ENCODE measurements at regions of chr7 and their contacts with region 1.

Region 1: DNA sequence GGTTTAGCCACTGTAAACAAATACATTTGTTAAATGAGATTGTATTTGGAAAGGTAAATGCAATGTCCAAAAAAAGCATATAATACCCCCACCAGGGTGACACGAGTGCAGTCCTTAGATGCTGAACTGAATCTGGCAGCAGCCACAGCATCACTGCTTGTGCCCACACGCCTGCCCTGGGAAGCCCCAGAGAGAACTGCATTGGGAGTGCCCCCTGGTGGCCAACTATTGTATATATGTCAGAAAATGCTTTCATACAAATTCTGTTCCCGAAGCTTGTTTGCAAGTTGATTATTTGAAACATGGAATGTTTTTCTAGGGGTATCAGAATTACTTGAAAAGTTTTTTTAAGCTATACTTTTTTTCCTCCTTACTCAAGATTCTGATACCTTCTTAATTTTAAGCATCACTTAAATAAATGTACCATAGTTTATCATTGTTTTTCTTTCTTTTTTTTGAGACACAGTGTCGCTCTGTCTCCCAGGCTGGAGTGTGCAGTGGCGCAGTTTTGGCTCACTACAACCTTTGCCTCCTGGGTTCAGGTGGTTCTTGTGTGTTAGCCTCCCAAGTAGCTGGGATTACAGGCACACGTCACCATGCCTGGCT is 50.1 kb downstream of the LANCL2 start:
- DNase-seq: peak; percentile 25
- ATAC-seq: peak; percentile 99
- H3K4me3 ChIP-seq: no peak overlapping the region
- H3K27ac ChIP-seq: no peak overlapping the region
- H3K4me1 ChIP-seq: no peaks in the 10 kb centered on the region
- H3K27me3 ChIP-seq: no peaks in the 10 kb centered on the region
- CTCF ChIP-seq: peak; percentile 64 to 76 (median 65)
- EP300 ChIP-seq: no peak
- POLR2A ChIP-seq: no peak
- RAD21 ChIP-seq: peak; percentile 85

Region 2: GRCh38 chr7:54758702-54759592 is 656.3 kb before region 1 on chr7 and contains the start of gene SEC61G:
- CTCF ChIA-PET with region 1: interaction called, 4 read pairs
- POLR2A ChIA-PET with region 1: no interaction called
- RAD21 ChIA-PET with region 1: interaction called, 6 read pairs
- SMC1A ChIA-PET with region 1: no interaction called
- in situ Hi-C with region 1: loop called (anchors 25 kb)
- intact Hi-C with region 1: no loop called
- DNase-seq: peak; percentile 90
- ATAC-seq: peak; percentile 96
- H3K4me3 ChIP-seq: peak within 1 kb of the TSS; percentile 97
- H3K27ac ChIP-seq: peak within 1 kb of the TSS; percentile 78
- H3K4me1 ChIP-seq: no peaks in the 10 kb centered on the region
- H3K27me3 ChIP-seq: no peaks in the 10 kb centered on the region
- CTCF ChIP-seq: no peak
- EP300 ChIP-seq: no peak
- POLR2A ChIP-seq: peak; percentile 92
- RAD21 ChIP-seq: no peak
- polyA plus RNA-seq, gene SEC61G: 709 to 809 TPM

Region 3: GRCh38 chr7:54773472-54774399 is 641.5 kb before region 1 on chr7:
- CTCF ChIA-PET with region 1: interaction called, 6 read pairs
- POLR2A ChIA-PET with region 1: no interaction called
- RAD21 ChIA-PET with region 1: interaction called, 3 read pairs
- SMC1A ChIA-PET with region 1: interaction called, 3 read pairs
- in situ Hi-C with region 1: loop called (anchors 25 kb)
- intact Hi-C with region 1: loop called (anchors 5 kb)
- DNase-seq: no peak
- ATAC-seq: peak; percentile 82
- H3K4me3 ChIP-seq: no peak overlapping the region
- H3K27ac ChIP-seq: no peak overlapping the region
- H3K4me1 ChIP-seq: no peaks in the 10 kb centered on the region
- H3K27me3 ChIP-seq: no peaks in the 10 kb centered on the region
- CTCF ChIP-seq: peak; percentile 71 to 89 (median 82)
- EP300 ChIP-seq: no peak
- POLR2A ChIP-seq: no peak
- RAD21 ChIP-seq: peak; percentile 96

Region 4: DNA sequence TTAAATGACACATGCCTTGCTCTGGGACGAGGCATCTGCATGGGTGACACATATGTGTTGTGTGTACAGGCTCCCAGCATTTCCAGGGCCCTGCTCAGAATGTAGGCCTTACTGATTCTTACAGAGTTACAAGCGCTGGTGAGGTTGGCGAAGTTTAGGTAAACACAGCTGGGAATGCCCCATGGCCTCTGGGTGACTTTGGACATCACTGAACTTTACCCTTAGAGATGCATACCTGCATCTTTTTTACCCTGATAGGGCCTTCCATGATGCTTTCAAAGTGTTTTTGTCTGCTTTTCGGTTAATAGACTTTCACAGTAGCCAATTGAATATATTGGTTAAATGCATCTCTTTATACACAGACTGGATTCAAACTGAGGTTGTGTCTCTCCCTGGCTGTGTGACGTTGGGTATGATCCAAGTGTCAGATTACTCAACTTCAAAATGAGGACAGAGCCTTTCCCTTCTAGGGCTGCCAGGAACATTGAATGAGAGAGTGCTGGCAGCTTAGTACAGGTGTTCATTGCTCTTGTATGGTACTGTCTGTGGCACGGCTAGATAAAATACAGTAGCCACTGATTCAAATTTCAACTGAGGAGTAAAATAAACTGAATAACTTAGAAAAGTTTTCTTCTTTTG is 366.9 kb before region 1 on chr7:
- CTCF ChIA-PET with region 1: no interaction called
- POLR2A ChIA-PET with region 1: no interaction called
- RAD21 ChIA-PET with region 1: no interaction called
- SMC1A ChIA-PET with region 1: no interaction called
- in situ Hi-C with region 1: no loop called
- intact Hi-C with region 1: no loop called
- DNase-seq: no peak
- ATAC-seq: no peak
- H3K4me3 ChIP-seq: no peak overlapping the region
- H3K27ac ChIP-seq: no peak overlapping the region
- H3K4me1 ChIP-seq: no peaks in the 10 kb centered on the region
- H3K27me3 ChIP-seq: no peaks in the 10 kb centered on the region
- CTCF ChIP-seq: no peak
- EP300 ChIP-seq: no peak
- POLR2A ChIP-seq: no peak
- RAD21 ChIP-seq: no peak

Region 5: GRCh38 chr7:55288070-55288824 is 127.0 kb before region 1 on chr7:
- CTCF ChIA-PET with region 1: interaction called, 322 read pairs
- POLR2A ChIA-PET with region 1: no interaction called
- RAD21 ChIA-PET with region 1: interaction called, 68 read pairs
- SMC1A ChIA-PET with region 1: interaction called, 140 read pairs
- in situ Hi-C with region 1: no loop called
- intact Hi-C with region 1: no loop called
- DNase-seq: no peak
- ATAC-seq: peak; percentile 86
- H3K4me3 ChIP-seq: no peak overlapping the region
- H3K27ac ChIP-seq: no peak overlapping the region
- H3K4me1 ChIP-seq: no peaks in the 10 kb centered on the region
- H3K27me3 ChIP-seq: no peaks in the 10 kb centered on the region; a peak in 1 of 4 replicates
- CTCF ChIP-seq: no peak; a peak in 1 of 6 replicates
- EP300 ChIP-seq: no peak
- POLR2A ChIP-seq: no peak
- RAD21 ChIP-seq: peak; percentile 51

Region 6: DNA sequence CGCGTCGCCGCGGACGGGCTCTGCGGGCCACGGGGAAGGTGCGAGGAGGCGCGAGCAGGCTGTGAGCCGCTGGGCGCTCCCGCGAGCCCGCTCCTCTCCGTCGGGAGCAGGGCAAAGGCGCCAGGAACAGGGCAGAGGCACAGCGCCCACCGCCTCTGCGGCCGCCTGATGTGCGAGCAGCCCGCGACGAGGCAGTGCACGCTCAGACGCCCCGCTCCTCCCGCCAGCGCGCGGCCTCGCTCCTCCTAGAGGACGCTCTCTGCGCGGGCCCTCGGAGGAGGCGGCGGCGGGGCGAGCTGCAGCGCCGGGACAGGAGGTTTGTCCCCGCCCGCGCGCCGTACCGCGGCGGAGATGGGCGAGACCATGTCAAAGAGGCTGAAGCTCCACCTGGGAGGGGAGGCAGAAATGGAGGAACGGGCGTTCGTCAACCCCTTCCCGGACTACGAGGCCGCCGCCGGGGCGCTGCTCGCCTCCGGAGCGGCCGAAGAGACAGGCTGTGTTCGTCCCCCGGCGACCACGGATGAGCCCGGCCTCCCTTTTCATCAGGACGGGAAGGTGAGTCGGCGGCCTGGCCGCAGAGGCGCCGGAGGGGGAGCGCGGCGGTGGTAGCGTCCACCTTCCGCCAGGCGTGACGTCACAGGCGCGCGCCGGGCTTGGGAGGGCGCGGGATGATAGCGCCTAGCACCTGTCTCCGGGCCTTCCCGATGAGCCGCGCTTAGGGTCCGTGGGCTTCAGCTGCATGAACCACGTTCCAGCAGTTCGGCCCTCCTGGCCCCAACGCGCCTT is 49.4 kb before region 1 on chr7:
- CTCF ChIA-PET with region 1: interaction called, 14 read pairs
- POLR2A ChIA-PET with region 1: interaction called, 7 read pairs
- RAD21 ChIA-PET with region 1: interaction called, 7 read pairs
- SMC1A ChIA-PET with region 1: interaction called, 11 read pairs
- in situ Hi-C with region 1: no loop called
- intact Hi-C with region 1: no loop called
- DNase-seq: peak; percentile 79
- ATAC-seq: peak; percentile 90
- H3K4me3 ChIP-seq: peak overlapping the region; percentile 99
- H3K27ac ChIP-seq: peak overlapping the region; percentile 91
- H3K4me1 ChIP-seq: peaks cover 9% of the 10 kb centered on the region
- H3K27me3 ChIP-seq: no peaks in the 10 kb centered on the region
- CTCF ChIP-seq: peak in 2 of 3 experiments; percentile 30 to 32; a peak in 3 of 6 replicates
- EP300 ChIP-seq: peak in 1 of 2 experiments; percentile 22; a peak in 1 of 4 replicates
- POLR2A ChIP-seq: peak; percentile 93
- RAD21 ChIP-seq: peak; percentile 31; the same call in 1 of the 2 replicates

Region 7: GRCh38 chr7:55400191-55400590 is 15.1 kb before region 1 on chr7:
- CTCF ChIA-PET with region 1: interaction called, 8 read pairs
- POLR2A ChIA-PET with region 1: no interaction called
- RAD21 ChIA-PET with region 1: interaction called, 6 read pairs
- SMC1A ChIA-PET with region 1: interaction called, 12 read pairs
- in situ Hi-C with region 1: no loop called
- intact Hi-C with region 1: no loop called
- DNase-seq: no peak
- ATAC-seq: no peak
- H3K4me3 ChIP-seq: no peak overlapping the region
- H3K27ac ChIP-seq: no peak overlapping the region
- H3K4me1 ChIP-seq: no peaks in the 10 kb centered on the region
- H3K27me3 ChIP-seq: no peaks in the 10 kb centered on the region
- CTCF ChIP-seq: no peak
- EP300 ChIP-seq: no peak
- POLR2A ChIP-seq: no peak
- RAD21 ChIP-seq: no peak

Region 8: DNA sequence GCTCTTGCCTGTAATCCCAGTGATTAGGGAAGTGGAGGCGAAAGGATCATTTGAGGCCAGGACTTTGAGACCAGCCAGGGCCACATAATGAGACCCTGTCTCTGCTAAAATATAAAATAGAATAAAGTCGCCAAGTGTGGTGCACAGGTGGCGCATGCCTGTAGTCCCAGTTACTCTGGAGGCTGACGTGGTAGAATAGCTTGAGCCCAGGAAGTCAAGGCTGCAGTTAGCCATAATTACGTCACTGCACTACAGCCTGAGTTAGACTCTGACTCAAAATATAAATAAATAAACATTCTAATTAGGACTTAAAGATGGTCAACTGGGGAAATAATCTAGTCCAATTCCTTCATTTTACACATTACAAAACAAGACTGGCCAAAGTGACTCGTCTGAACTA is 690.2 kb after region 1 on chr7:
- CTCF ChIA-PET with region 1: no interaction called
- POLR2A ChIA-PET with region 1: no interaction called
- RAD21 ChIA-PET with region 1: no interaction called
- SMC1A ChIA-PET with region 1: no interaction called
- in situ Hi-C with region 1: no loop called
- intact Hi-C with region 1: no loop called
- DNase-seq: no peak
- ATAC-seq: peak; percentile 68
- H3K4me3 ChIP-seq: peak overlapping the region; percentile 87
- H3K27ac ChIP-seq: peak overlapping the region; percentile 94
- H3K4me1 ChIP-seq: no peaks in the 10 kb centered on the region
- H3K27me3 ChIP-seq: no peaks in the 10 kb centered on the region
- CTCF ChIP-seq: no peak
- EP300 ChIP-seq: no peak
- POLR2A ChIP-seq: no peak
- RAD21 ChIP-seq: no peak

Measured in GM12878 (cell line).